Heart right ventricle (tissue), 16 donors: ENCODE measurements at regions of chr1 and their contacts with region 1.

Region 1: DNA sequence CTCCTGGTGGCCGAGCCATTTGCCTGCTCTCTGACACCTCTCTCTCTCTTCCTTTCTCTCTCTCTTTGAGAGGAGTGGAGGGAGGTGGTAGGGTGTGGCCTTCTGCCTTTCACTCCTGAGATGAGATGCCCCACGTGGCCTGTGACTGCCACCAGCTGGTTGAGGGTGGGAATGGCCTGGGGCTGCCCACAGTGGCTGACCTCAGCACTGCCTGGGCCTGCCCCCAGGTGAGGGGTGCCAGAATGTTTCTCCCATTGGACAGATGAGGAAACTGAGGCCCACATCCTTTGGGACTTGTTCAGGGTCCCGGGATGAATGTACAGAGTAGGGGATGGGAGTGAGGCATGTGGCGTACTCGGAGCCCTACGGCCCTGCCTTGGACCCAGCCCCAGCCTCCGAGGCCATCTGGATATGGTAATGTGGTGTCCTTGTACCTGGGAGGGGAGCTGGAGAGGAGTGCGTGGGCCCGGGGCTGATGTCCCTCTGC is 12.7 kb upstream of the C1orf167 start:
- DNase-seq: peak; percentile 28 to 43
- ATAC-seq: peak in 7 of 8 donors; percentile 37 to 79 (median 57)
- H3K4me3 ChIP-seq: no peak overlapping the region
- H3K27ac ChIP-seq: peak overlapping the region in 1 of 10 donors; percentile 31
- H3K4me1 ChIP-seq: peaks cover 0 to 18% (median 12%) of the 10 kb centered on the region in 9 donors
- H3K27me3 ChIP-seq: no peaks in the 10 kb centered on the region
- CTCF ChIP-seq: peak; percentile 11 to 61 (median 46)

Region 2: GRCh38 chr1:11670747-11671146 is 78.5 kb before region 1 on chr1:
- intact Hi-C with region 1: no loop called
- DNase-seq: no peak
- ATAC-seq: no peak
- H3K4me3 ChIP-seq: no peak overlapping the region
- H3K27ac ChIP-seq: peak overlapping the region in 1 of 10 donors; percentile 0
- H3K4me1 ChIP-seq: peaks cover 0 to 15% (median 5%) of the 10 kb centered on the region in 9 donors
- H3K27me3 ChIP-seq: no peaks in the 10 kb centered on the region
- CTCF ChIP-seq: no peak

Region 3: GRCh38 chr1:11813021-11813420 is 63.8 kb after region 1 on chr1:
- intact Hi-C with region 1: loop called in 1 of 10 experiments (anchors 10 kb)
- DNase-seq: no peak
- ATAC-seq: no peak
- H3K4me3 ChIP-seq: no peak overlapping the region
- H3K27ac ChIP-seq: no peak overlapping the region
- H3K4me1 ChIP-seq: peaks cover 0 to 36% (median 9%) of the 10 kb centered on the region in 9 donors
- H3K27me3 ChIP-seq: no peaks in the 10 kb centered on the region
- CTCF ChIP-seq: no peak

Region 4: GRCh38 chr1:12184008-12184681 is 434.9 kb after region 1 on chr1:
- intact Hi-C with region 1: no loop called
- DNase-seq: peak; percentile 86 to 89
- ATAC-seq: peak; percentile 86 to 91 (median 90)
- H3K4me3 ChIP-seq: peak overlapping the region in 9 of 10 donors; percentile 9 to 44 (median 36)
- H3K27ac ChIP-seq: peak overlapping the region; percentile 83 to 99 (median 93)
- H3K4me1 ChIP-seq: peaks cover 20 to 100% (median 93%) of the 10 kb centered on the region in 9 donors
- H3K27me3 ChIP-seq: no peaks in the 10 kb centered on the region
- CTCF ChIP-seq: peak in 8 of 9 donors; percentile 12 to 61 (median 41)